ENCODE measurements at regions of chr5 and their contacts with region 1.

Region 1: DNA sequence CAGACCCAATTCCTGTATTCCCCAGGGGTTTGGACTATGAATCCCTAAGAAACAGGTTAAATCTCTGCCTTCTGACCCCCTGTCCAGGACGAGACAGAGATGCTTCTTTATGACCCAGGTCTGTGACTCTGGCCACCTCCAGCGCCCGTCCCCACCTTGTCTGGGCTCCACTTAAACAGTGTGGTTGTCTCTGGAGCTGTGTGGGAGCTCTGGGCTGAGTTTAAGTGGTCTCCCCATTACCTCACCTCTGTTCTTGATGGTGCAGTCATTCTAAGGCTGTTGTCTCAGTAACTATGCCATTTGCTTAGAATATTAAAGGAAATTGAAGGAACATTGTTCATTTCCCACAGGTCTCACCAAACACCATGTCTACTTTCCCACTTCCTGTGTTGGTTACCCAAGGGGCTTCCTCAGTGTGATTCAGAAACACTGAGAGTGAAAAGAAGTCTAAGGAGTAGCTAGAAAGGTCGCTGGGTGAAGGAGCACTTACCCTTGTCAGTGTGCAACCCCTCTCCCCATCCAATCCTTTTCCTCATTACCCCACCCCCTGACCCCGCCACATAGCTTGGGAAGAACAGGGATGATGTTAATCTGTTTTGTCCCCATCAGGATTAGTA is 127.8 kb upstream of the CKMT2 start:
- DNase-seq: no peak
- ATAC-seq: no peak
- H3K4me3 ChIP-seq: no peak overlapping the region
- H3K27ac ChIP-seq: no peak overlapping the region
- H3K4me1 ChIP-seq: no peaks in the 10 kb centered on the region
- H3K27me3 ChIP-seq: no peaks in the 10 kb centered on the region
- CTCF ChIP-seq: no peak
- EP300 ChIP-seq: no peak
- POLR2A ChIP-seq: no peak
- RAD21 ChIP-seq: no peak

Region 2: DNA sequence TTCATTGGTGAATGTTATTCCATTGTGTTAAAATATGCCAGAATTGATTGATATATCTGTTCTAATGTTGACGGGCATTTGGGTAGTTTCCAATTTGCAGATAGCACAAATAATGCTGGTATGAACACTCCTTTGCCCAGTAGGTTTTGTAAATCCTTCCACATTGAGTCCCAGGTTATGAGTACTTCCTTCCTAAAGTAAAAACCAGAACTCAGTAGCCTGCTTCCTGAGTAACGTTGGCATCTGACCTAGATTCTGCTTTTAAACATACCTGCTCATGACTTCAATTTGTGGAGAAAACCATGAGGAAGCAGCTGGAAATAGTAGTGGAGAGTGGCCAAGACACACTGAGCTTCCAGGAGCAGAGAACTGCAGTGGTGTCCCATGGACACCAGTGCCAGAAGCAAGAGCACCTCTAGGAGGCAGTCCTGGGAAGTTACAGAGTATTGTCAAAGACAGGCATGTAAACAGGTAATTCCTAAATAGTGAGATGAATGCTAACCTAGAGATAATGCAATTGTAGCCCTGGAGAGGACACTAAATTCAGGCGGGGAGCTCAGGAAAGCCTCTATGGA is 169.5 kb before region 1 on chr5:
- CTCF ChIA-PET with region 1: interaction called, 19 read pairs
- POLR2A ChIA-PET with region 1: no interaction called
- in situ Hi-C with region 1: no loop called
- intact Hi-C with region 1: loop called (anchors 1 kb)
- DNase-seq: peak; percentile 16
- ATAC-seq: peak; percentile 79
- H3K4me3 ChIP-seq: no peak overlapping the region
- H3K27ac ChIP-seq: no peak overlapping the region
- H3K4me1 ChIP-seq: no peaks in the 10 kb centered on the region
- H3K27me3 ChIP-seq: no peaks in the 10 kb centered on the region
- CTCF ChIP-seq: peak; percentile 56
- EP300 ChIP-seq: no peak
- POLR2A ChIP-seq: no peak
- RAD21 ChIP-seq: peak; percentile 23; the same call in 1 of the 2 replicates

Region 3: DNA sequence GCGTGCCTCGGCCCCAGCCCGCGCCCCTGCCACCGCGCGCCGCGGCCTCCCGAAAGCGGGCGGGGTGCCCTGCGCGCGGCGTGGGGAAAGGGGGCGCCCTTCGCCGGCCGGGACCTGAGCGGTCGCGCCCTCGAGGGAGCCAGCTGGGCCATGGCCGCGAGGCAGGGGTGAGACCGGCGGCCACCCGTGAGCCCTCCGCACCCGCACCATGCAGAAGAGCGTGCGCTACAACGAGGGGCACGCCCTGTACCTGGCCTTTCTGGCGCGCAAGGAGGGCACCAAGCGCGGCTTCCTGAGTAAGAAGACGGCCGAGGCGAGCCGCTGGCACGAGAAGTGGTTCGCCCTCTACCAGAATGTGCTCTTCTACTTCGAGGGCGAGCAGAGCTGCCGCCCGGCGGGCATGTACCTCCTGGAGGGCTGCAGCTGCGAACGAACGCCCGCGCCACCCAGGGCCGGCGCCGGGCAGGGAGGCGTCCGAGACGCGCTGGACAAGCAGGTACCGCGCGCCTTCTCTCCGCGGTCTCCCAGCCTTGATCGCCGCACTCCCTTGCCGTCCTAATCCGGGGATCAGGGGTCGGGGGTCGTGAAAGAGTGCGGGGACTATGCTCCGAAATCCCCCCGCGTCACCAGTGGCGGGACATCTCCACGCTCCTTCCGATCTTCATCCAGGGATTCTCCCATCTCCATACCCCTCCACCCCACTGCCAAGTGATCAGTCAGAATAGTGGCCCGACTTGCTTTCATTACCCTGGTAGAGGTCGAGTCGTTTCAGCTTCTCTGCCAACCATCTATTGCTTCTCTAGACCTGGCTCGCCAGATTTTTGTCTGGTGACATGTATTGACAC is 144.6 kb before region 1 on chr5:
- CTCF ChIA-PET with region 1: interaction called, 3 read pairs
- POLR2A ChIA-PET with region 1: no interaction called
- in situ Hi-C with region 1: no loop called
- intact Hi-C with region 1: loop called (anchors 1 kb)
- DNase-seq: peak; percentile 18
- ATAC-seq: peak; percentile 78
- H3K4me3 ChIP-seq: peak overlapping the region; percentile 84 to 98 (median 93)
- H3K27ac ChIP-seq: peak overlapping the region; percentile 75
- H3K4me1 ChIP-seq: peaks cover 59% of the 10 kb centered on the region
- H3K27me3 ChIP-seq: peaks cover 0 to 3% of the 10 kb centered on the region in 2 experiments; a peak in 1 of 5 replicates
- CTCF ChIP-seq: peak; percentile 69
- EP300 ChIP-seq: no peak
- POLR2A ChIP-seq: peak in 1 of 2 experiments; percentile 19; a peak in 1 of 4 replicates
- RAD21 ChIP-seq: peak; percentile 65; the same call in 1 of the 2 replicates

Region 4: GRCh38 chr5:80985600-80986228 is 119.7 kb before region 1 on chr5:
- CTCF ChIA-PET with region 1: no interaction called
- POLR2A ChIA-PET with region 1: no interaction called
- in situ Hi-C with region 1: no loop called
- intact Hi-C with region 1: no loop called
- DNase-seq: no peak
- ATAC-seq: no peak
- H3K4me3 ChIP-seq: no peak overlapping the region
- H3K27ac ChIP-seq: no peak overlapping the region
- H3K4me1 ChIP-seq: peaks cover 61% of the 10 kb centered on the region
- H3K27me3 ChIP-seq: no peaks in the 10 kb centered on the region
- CTCF ChIP-seq: no peak
- EP300 ChIP-seq: no peak
- POLR2A ChIP-seq: no peak
- RAD21 ChIP-seq: no peak

Region 5: DNA sequence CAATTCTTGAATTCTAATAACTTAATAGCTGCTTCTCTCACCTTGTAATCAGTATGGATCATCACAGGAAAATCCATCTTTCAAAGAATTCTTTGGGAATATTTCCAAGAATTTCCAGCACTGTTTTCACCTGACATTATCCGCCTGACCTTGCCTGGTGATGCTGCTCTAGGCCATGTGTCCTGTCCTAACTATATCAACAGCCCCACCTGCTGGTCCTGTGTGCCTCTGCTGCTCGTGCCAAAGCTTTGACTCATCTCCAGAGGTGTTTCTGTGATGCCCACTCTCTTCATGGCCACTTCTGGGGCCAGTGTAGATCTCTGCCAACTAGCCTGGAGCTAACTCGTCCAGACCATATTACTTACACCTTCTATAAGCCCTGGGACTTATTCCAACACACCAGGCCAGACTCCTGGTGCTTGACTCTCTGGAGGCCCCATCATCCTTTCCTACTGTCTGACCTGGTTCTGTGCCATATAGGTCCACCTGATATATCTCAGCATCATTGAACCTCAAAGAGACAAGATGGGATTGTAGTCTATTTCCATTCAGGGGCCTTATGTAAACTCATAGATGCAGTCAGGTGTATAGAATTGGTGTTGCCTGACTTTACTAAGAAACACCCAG is 60.2 kb after region 1 on chr5:
- CTCF ChIA-PET with region 1: no interaction called
- POLR2A ChIA-PET with region 1: no interaction called
- in situ Hi-C with region 1: no loop called
- intact Hi-C with region 1: loop called (anchors 2 kb)
- DNase-seq: peak; percentile 67
- ATAC-seq: peak; percentile 97
- H3K4me3 ChIP-seq: no peak overlapping the region
- H3K27ac ChIP-seq: no peak overlapping the region
- H3K4me1 ChIP-seq: no peaks in the 10 kb centered on the region
- H3K27me3 ChIP-seq: no peaks in the 10 kb centered on the region
- CTCF ChIP-seq: peak; percentile 82
- EP300 ChIP-seq: no peak
- POLR2A ChIP-seq: no peak
- RAD21 ChIP-seq: peak; percentile 57; the same call in 1 of the 2 replicates